A549 (cell line): ENCODE measurements at regions of chr2 and their contacts with region 1.

Region 1: GRCh38 chr2:138787053-138787666 is 7.0 kb upstream of the NXPH2 start:
- DNase-seq: peak in 1 of 2 experiments; percentile 25
- ATAC-seq: peak; percentile 43 to 58; a peak in 4 of 6 replicates
- H3K4me3 ChIP-seq: no peak overlapping the region
- H3K27ac ChIP-seq: no peak overlapping the region
- H3K4me1 ChIP-seq: no peaks in the 10 kb centered on the region
- CTCF ChIP-seq: peak; percentile 84
- EP300 ChIP-seq: no peak
- POLR2A ChIP-seq: no peak
- RAD21 ChIP-seq: peak; percentile 85 to 88

Region 2: DNA sequence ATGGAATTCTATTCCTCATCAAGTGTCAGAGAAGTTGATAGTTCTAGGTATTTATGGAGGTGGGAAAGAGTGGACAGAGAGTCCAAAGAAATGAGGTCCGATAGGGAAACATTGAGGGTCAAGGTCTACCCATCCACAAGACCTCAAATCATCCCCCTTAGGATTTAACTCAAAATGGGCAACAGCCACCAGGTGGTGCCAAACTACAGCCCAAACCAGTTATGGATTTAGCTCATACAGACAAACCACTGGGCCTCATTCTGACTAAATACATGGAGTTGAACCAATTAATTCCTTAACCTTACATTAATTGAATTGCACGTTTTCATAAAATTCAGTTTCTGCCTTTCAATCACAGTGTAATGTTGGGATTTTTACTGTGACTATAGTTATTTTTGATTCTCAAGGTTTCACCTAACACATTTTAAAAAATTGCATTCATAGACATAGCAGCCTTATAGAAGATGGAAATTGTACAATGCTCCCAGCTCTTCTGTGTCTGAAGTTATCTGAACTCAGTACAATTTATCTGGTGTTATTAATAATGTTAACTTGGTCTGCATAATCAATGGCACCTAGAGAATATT is 921.1 kb before region 1 on chr2:
- CTCF ChIA-PET with region 1: interaction called, 11 read pairs
- POLR2A ChIA-PET with region 1: no interaction called
- DNase-seq: peak; percentile 5 to 67
- ATAC-seq: peak; percentile 88 to 93
- H3K4me3 ChIP-seq: no peak overlapping the region
- H3K27ac ChIP-seq: no peak overlapping the region
- H3K4me1 ChIP-seq: no peaks in the 10 kb centered on the region
- CTCF ChIP-seq: peak; percentile 81
- EP300 ChIP-seq: no peak
- POLR2A ChIP-seq: no peak
- RAD21 ChIP-seq: peak; percentile 81 to 90

Region 3: GRCh38 chr2:137888845-137889244 is 898.3 kb before region 1 on chr2:
- CTCF ChIA-PET with region 1: interaction called, 27 read pairs
- POLR2A ChIA-PET with region 1: no interaction called
- DNase-seq: peak; percentile 8 to 61
- ATAC-seq: peak; percentile 46 to 64; a peak in 3 of 6 replicates
- H3K4me3 ChIP-seq: no peak overlapping the region
- H3K27ac ChIP-seq: no peak overlapping the region
- H3K4me1 ChIP-seq: no peaks in the 10 kb centered on the region
- CTCF ChIP-seq: peak; percentile 61
- EP300 ChIP-seq: no peak
- POLR2A ChIP-seq: no peak
- RAD21 ChIP-seq: peak; percentile 62 to 74

Region 4: GRCh38 chr2:137910641-137911040 is 876.5 kb before region 1 on chr2:
- CTCF ChIA-PET with region 1: interaction called, 52 read pairs
- POLR2A ChIA-PET with region 1: interaction called, 3 read pairs
- DNase-seq: peak in 1 of 2 experiments; percentile 12
- ATAC-seq: no peak
- H3K4me3 ChIP-seq: no peak overlapping the region
- H3K27ac ChIP-seq: no peak overlapping the region
- H3K4me1 ChIP-seq: peaks cover 6% of the 10 kb centered on the region; the same call in 2 of the 3 replicates
- CTCF ChIP-seq: peak; percentile 82
- EP300 ChIP-seq: no peak
- POLR2A ChIP-seq: no peak
- RAD21 ChIP-seq: peak; percentile 77 to 95

Region 5: DNA sequence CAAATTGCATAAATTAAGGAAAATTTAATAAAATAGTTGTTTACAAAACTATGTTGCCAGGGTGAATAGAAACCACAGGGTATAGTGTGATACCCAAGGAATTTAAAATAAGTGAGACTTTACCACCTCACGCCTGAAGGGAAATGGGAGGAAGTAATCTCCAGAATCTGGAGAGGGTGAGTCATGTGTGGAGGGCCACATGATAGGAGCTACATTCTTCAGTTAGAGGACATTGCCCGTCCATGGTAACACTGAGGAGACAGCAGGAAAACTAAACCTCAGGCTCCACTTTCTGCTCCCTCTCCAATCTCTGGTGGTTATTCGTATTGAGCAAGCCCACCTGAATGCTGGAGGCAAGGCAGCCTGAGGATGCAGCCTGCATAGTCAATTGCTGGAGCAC is 90.3 kb after region 1 on chr2:
- CTCF ChIA-PET with region 1: no interaction called
- POLR2A ChIA-PET with region 1: no interaction called
- DNase-seq: no peak
- ATAC-seq: no peak
- H3K4me3 ChIP-seq: no peak overlapping the region
- H3K27ac ChIP-seq: no peak overlapping the region
- H3K4me1 ChIP-seq: no peaks in the 10 kb centered on the region
- CTCF ChIP-seq: no peak
- EP300 ChIP-seq: no peak
- POLR2A ChIP-seq: no peak
- RAD21 ChIP-seq: no peak